Natural killer cell (primary cell): ENCODE measurements at regions of chr11 and their contacts with region 1.

Region 1: DNA sequence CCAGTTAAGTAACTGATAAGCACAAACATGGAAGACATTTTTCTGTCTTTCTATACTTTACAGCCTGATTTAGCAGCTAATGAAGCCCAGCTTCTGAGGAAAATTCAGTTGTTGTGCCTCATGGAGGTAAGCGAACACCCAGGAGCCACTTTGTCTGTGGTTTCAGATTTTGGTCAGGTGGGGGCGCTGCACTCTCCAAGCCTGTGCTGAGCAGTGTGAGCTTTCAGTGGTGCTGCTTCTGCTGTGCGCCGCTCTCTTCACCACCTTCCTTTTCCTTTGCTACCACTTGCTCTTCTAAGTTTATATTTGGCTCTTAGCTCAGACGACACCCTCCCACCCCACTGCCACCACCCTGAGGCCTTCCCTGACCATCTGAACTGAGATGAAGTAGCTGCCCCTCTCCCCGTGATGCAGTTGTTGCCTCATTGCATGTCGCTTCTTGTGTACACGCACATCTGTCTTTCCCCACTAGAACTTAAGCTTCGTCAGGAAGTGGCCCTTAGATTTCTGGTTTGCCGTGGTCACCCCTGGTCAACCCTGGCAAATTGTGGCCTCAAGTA is 14.0 kb downstream of the PSMD13 start:
- DNase-seq: peak; percentile 73 to 90
- ATAC-seq: peak; percentile 93 to 100 (median 97)
- H3K4me3 ChIP-seq: no peak overlapping the region
- H3K4me3 Mint-ChIP-seq: no peak overlapping the region
- H3K27ac ChIP-seq: no peak overlapping the region
- H3K27ac Mint-ChIP-seq: peak overlapping the region in 1 of 2 donors; percentile 40
- H3K4me1 ChIP-seq: peaks cover 5% of the 10 kb centered on the region
- H3K4me1 Mint-ChIP-seq: peaks cover 0 to 13% of the 10 kb centered on the region in 2 donors
- H3K27me3 ChIP-seq: no peaks in the 10 kb centered on the region
- H3K27me3 Mint-ChIP-seq: no peaks in the 10 kb centered on the region
- CTCF ChIP-seq: peak; percentile 67

Region 2: DNA sequence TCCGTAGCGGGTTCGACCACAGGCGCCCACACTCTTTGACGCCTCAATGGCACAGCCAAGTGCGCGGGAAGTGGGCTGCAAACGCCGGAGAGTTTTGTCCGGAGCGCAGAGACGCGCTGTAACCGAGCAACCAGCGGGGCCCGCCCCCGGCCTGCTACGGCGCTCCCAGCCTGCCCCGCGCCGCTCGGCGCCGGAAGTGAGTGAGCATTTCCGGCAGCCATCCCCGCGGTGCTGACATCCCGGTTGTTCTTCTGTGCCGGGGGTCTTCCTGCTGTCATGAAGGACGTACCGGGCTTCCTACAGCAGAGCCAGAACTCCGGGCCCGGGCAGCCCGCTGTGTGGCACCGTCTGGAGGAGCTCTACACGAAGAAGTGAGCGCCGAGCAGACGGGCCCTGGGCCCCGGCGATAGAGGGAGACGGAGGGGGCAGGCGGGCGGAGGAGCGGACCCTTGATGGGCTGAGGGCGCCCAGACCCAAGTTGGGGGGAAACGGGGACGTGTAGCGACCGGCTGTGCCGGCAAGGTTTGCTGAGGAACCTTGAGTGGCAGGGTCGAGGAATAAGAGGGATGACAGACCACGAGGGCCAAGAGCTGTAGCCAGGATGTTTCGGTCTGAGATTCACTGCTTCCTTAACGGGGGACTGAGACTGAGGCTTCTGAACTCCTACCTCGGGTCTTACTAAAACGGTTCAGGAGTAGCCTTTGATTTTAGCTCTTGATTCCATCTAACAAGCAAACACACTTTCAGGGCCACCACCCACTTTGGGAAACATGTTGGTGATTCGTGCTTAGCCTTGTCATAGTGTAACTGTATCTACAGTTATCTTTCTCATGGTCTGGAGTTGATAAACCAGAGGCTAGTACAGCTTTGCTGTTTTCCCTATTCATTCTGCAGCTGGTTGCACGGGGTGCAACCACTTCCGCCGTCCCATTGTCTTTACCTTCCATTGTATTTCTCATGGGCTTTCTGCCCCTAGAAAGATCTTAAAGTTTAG is 13.7 kb before region 1 on chr11 and contains the start of gene PSMD13:
- intact Hi-C with region 1: no loop called
- DNase-seq: peak; percentile 87 to 94
- ATAC-seq: peak; percentile 76 to 90 (median 79)
- H3K4me3 ChIP-seq: peak within 1 kb of the TSS; percentile 99
- H3K4me3 Mint-ChIP-seq: peak within 1 kb of the TSS; percentile 97
- H3K27ac ChIP-seq: peak within 1 kb of the TSS; percentile 100
- H3K27ac Mint-ChIP-seq: peak within 1 kb of the TSS; percentile 98
- H3K4me1 ChIP-seq: peaks cover 20% of the 10 kb centered on the region
- H3K4me1 Mint-ChIP-seq: peaks cover 38 to 42% of the 10 kb centered on the region in 2 donors
- H3K27me3 ChIP-seq: no peaks in the 10 kb centered on the region
- H3K27me3 Mint-ChIP-seq: no peaks in the 10 kb centered on the region
- CTCF ChIP-seq: no peak
- total RNA-seq, gene PSMD13: 94.6 to 111 (median 104) TPM

Region 3: GRCh38 chr11:363948-364761 is 113.3 kb after region 1 on chr11:
- intact Hi-C with region 1: loop called (anchors 2 kb)
- DNase-seq: peak; percentile 64 to 79
- ATAC-seq: peak; percentile 84 to 89 (median 86)
- H3K4me3 ChIP-seq: no peak overlapping the region
- H3K4me3 Mint-ChIP-seq: peak overlapping the region; percentile 72
- H3K27ac ChIP-seq: peak overlapping the region; percentile 46
- H3K27ac Mint-ChIP-seq: peak overlapping the region; percentile 81 to 85
- H3K4me1 ChIP-seq: peaks cover 58% of the 10 kb centered on the region
- H3K4me1 Mint-ChIP-seq: peaks cover 25 to 57% of the 10 kb centered on the region in 2 donors
- H3K27me3 ChIP-seq: peaks cover 13% of the 10 kb centered on the region
- H3K27me3 Mint-ChIP-seq: peaks cover 17 to 23% of the 10 kb centered on the region in 2 donors
- CTCF ChIP-seq: peak; percentile 68

Region 4: GRCh38 chr11:615504-616319 is 364.9 kb after region 1 on chr11 and contains the start of gene IRF7:
- intact Hi-C with region 1: no loop called
- DNase-seq: peak; percentile 84 to 91
- ATAC-seq: peak; percentile 80 to 92 (median 82)
- H3K4me3 ChIP-seq: peak within 1 kb of the TSS; percentile 88
- H3K4me3 Mint-ChIP-seq: peak within 1 kb of the TSS; percentile 92
- H3K27ac ChIP-seq: peak within 1 kb of the TSS; percentile 93
- H3K27ac Mint-ChIP-seq: peak within 1 kb of the TSS; percentile 89
- H3K4me1 ChIP-seq: peaks cover 39% of the 10 kb centered on the region
- H3K4me1 Mint-ChIP-seq: peaks cover 6 to 22% of the 10 kb centered on the region in 2 donors
- H3K27me3 ChIP-seq: no peaks in the 10 kb centered on the region
- H3K27me3 Mint-ChIP-seq: no peaks in the 10 kb centered on the region
- CTCF ChIP-seq: no peak
- total RNA-seq, gene IRF7: 63.3 to 97.3 (median 77.3) TPM